Heart left ventricle (tissue), 16 donors: ENCODE measurements at regions of chr1 and their contacts with region 1.

Region 1: GRCh38 chr1:116377541-116378529 is 4.8 kb downstream of the ATP1A1 start:
- DNase-seq: peak; percentile 68 to 85 (median 72)
- ATAC-seq: peak; percentile 32 to 52 (median 40)
- H3K4me3 ChIP-seq: peak overlapping the region in 10 of 12 donors; percentile 7 to 89 (median 82)
- H3K27ac ChIP-seq: peak overlapping the region; percentile 89 to 99 (median 97)
- H3K4me1 ChIP-seq: peaks cover 18 to 88% (median 82%) of the 10 kb centered on the region in 12 donors
- H3K27me3 ChIP-seq: no peaks in the 10 kb centered on the region
- CTCF ChIP-seq: no peak
- POLR2A ChIP-seq: no peak

Region 2: GRCh38 chr1:116115476-116116439 is 262.1 kb before region 1 on chr1:
- intact Hi-C with region 1: no loop called
- DNase-seq: no peak
- ATAC-seq: no peak
- H3K4me3 ChIP-seq: no peak overlapping the region
- H3K27ac ChIP-seq: no peak overlapping the region
- H3K4me1 ChIP-seq: peaks cover 0 to 8% (median 0%) of the 10 kb centered on the region in 12 donors
- H3K27me3 ChIP-seq: no peaks in the 10 kb centered on the region
- CTCF ChIP-seq: no peak
- POLR2A ChIP-seq: no peak

Region 3: DNA sequence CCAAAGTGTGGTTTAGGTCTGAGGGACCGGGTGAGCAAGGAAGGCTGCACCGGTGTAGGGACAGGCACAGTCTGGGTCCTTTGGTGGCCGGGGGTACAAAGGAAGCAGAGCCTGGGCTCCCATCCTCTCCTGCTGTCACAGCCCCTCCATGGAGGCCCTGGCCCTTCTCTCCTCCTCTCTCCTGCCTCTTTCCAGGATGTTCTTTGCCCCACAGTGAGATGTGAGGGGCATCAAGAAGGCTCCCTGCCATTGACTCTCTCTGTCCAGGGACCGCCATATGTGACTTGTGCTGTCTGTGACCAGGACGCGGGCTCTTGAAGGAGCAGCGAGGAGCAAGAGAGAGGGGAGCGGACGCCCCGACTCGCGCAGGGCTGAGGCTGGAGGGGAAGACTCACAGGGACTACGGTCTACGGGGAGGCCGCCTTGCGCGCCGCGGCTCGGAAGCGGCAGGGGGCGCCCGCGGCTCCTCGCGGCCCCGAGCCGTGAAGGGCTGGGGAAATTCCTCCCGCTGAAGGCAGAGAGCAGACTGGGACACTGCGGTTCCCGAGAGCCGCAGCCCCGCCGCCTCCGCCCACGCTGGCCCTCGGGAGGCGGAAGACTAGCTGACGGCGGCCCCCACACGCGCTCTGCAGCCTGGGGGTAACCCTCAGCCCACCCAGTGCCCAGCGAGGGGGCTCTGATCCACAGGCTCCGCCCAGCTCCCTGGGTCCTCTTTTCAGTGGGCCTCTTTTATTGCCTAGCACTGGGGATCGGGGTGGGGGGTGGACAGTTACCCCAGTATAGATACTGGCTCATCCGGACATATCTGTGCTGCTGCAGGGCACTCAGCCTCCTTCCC is 225.9 kb before region 1 on chr1:
- intact Hi-C with region 1: loop called in 6 of 10 experiments (anchors 5 to 10 kb)
- DNase-seq: peak; percentile 77 to 86 (median 79)
- ATAC-seq: peak; percentile 60 to 98 (median 94)
- H3K4me3 ChIP-seq: peak overlapping the region in 10 of 12 donors; percentile 38 to 65 (median 54)
- H3K27ac ChIP-seq: peak overlapping the region; percentile 3 to 87 (median 70)
- H3K4me1 ChIP-seq: peaks cover 0 to 27% (median 12%) of the 10 kb centered on the region in 12 donors
- H3K27me3 ChIP-seq: no peaks in the 10 kb centered on the region
- CTCF ChIP-seq: peak; percentile 85 to 98 (median 96)
- POLR2A ChIP-seq: peak in 1 of 2 donors; percentile 24

Region 4: DNA sequence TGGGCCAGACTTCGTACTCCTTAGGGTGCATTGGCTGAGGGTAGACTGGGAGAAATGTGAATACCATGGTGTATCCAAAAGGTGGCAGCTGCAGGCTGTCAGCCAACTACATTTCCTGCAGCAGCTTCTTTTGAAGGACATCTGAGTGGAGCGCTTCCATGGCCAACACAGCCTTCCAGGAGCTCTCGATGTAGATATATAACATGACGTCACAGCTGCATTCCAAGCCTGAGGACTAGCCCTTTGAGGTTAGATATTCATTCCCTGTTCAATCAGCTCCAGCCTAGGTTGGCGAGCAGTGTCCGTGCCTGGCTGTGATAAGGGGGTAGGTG is 158.9 kb before region 1 on chr1:
- intact Hi-C with region 1: loop called in 1 of 10 experiments (anchors 5 kb)
- DNase-seq: peak in 4 of 5 donors; percentile 26 to 72 (median 58)
- ATAC-seq: peak; percentile 87 to 95 (median 92)
- H3K4me3 ChIP-seq: no peak overlapping the region
- H3K27ac ChIP-seq: peak overlapping the region in 1 of 12 donors; percentile 44
- H3K4me1 ChIP-seq: peaks cover 0 to 7% (median 0%) of the 10 kb centered on the region in 12 donors
- H3K27me3 ChIP-seq: no peaks in the 10 kb centered on the region
- CTCF ChIP-seq: peak in 1 of 12 donors; percentile 8
- POLR2A ChIP-seq: no peak

Region 5: GRCh38 chr1:116411784-116412479 is 34.1 kb after region 1 on chr1:
- intact Hi-C with region 1: loop called in 7 of 10 experiments (anchors 5 kb)
- DNase-seq: no peak
- ATAC-seq: no peak
- H3K4me3 ChIP-seq: no peak overlapping the region
- H3K27ac ChIP-seq: peak overlapping the region in 6 of 12 donors; percentile 21 to 89 (median 64)
- H3K4me1 ChIP-seq: peaks cover 0 to 63% (median 20%) of the 10 kb centered on the region in 12 donors
- H3K27me3 ChIP-seq: no peaks in the 10 kb centered on the region
- CTCF ChIP-seq: no peak
- POLR2A ChIP-seq: no peak

Region 6: GRCh38 chr1:116418091-116418830 is 40.4 kb after region 1 on chr1:
- intact Hi-C with region 1: loop called in 7 of 10 experiments (anchors 5 kb)
- DNase-seq: peak; percentile 85 to 93 (median 88)
- ATAC-seq: peak; percentile 24 to 79 (median 72)
- H3K4me3 ChIP-seq: peak overlapping the region; percentile 65 to 88 (median 78)
- H3K27ac ChIP-seq: peak overlapping the region; percentile 63 to 95 (median 84)
- H3K4me1 ChIP-seq: peaks cover 4 to 44% (median 22%) of the 10 kb centered on the region in 12 donors
- H3K27me3 ChIP-seq: no peaks in the 10 kb centered on the region
- CTCF ChIP-seq: peak in 1 of 12 donors; percentile 32
- POLR2A ChIP-seq: peak in 1 of 2 donors; percentile 51

Region 7: GRCh38 chr1:116433275-116434257 is 55.7 kb after region 1 on chr1:
- intact Hi-C with region 1: loop called in 1 of 10 experiments (anchors 2 kb)
- DNase-seq: peak; percentile 67 to 86 (median 68)
- ATAC-seq: peak; percentile 88 to 95 (median 91)
- H3K4me3 ChIP-seq: no peak overlapping the region
- H3K27ac ChIP-seq: peak overlapping the region; percentile 41 to 91 (median 78)
- H3K4me1 ChIP-seq: peaks cover 0 to 34% (median 7%) of the 10 kb centered on the region in 12 donors
- H3K27me3 ChIP-seq: no peaks in the 10 kb centered on the region
- CTCF ChIP-seq: no peak
- POLR2A ChIP-seq: peak in 1 of 2 donors; percentile 11

Region 8: DNA sequence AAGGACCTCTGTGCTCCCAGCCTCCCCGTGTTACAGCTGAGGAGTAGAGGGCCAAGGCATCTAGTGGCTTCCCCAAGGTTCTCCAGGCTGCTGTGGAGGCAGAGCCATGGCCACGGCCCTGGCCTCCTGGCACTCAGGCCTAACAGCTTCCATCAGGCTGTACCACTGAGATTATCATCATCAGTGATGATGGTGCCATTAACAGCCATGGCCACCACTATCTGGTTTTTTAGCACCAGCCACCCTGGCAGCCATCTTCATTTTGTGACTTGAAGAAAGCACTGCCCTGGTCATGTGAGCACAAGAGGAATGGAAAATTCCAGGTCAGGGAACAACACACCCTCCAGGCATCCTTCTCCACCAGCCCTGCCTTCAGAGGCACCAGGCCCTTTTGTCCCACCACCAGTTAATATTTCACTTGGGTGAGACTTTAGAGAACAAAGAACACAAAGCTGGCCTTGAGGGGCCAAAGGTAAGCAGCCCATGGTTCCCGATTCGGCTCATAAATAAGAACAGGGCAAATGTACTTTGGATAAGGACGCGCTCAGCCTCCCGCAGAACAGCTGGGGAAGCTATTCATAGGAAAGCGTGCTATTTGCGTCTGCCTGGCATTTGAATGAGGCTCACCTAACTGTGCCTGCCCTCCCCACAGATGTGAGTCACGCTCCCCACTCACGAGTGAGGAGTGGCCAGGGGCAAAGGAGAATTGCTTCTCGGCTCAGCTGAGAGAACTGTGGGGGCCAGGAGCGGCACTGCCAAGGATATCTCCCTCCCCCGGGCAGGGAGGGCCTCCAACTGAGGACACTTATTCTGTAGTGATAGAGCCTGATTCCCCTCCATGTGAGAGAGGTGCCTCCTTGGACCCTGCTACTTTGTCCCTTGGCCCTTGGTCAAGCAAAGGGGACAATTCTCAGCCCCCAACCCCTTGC is 97.3 kb after region 1 on chr1:
- intact Hi-C with region 1: loop called in 4 of 10 experiments (anchors 2 to 5 kb)
- DNase-seq: peak; percentile 56 to 86 (median 70)
- ATAC-seq: peak; percentile 69 to 87 (median 86)
- H3K4me3 ChIP-seq: no peak overlapping the region
- H3K27ac ChIP-seq: peak overlapping the region; percentile 75 to 96 (median 90)
- H3K4me1 ChIP-seq: peaks cover 0 to 40% (median 23%) of the 10 kb centered on the region in 12 donors
- H3K27me3 ChIP-seq: no peaks in the 10 kb centered on the region
- CTCF ChIP-seq: no peak
- POLR2A ChIP-seq: no peak